Activated B cell treated with CpG ODN at 0.5 μM for 24 hours (primary cell): ENCODE measurements at regions of chr3 and their contacts with region 1.

Region 1: GRCh38 chr3:177197041-177197727 is at the start of gene TBL1XR1:
- DNase-seq: peak; percentile 80
- ATAC-seq: peak; percentile 58
- H3K4me3 Mint-ChIP-seq: peak within 1 kb of the TSS; percentile 97
- H3K27ac Mint-ChIP-seq: peak within 1 kb of the TSS; percentile 97
- H3K4me1 Mint-ChIP-seq: peaks cover 59% of the 10 kb centered on the region
- H3K27me3 Mint-ChIP-seq: no peaks in the 10 kb centered on the region
- CTCF ChIP-seq: no peak
- total RNA-seq, gene TBL1XR1: 312 and 372 TPM in 2 replicates

Region 2: DNA sequence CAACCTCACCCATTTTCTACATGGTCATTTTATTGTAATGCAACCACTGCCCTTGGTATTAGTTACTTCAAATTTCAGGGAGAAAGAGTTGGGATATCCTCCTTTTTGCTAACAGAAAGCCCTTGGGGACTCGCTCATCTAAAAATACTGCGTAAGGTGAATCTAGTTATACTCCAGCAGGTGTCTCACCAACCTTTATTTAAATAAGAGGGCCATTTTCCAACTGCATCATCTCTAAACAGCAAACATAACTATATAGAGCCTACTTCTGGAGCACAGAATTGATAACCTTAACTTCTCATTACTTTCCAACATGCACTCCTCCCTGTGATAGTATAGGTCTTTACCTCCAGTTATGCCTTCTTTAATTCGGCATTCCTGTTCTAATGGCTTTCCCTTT is 77.4 kb before region 1 on chr3:
- CTCF ChIA-PET with region 1: no interaction called
- POLR2A ChIA-PET with region 1: no interaction called
- intact Hi-C with region 1: loop called (anchors 2 kb)
- DNase-seq: no peak
- ATAC-seq: no peak
- H3K4me3 Mint-ChIP-seq: no peak overlapping the region
- H3K27ac Mint-ChIP-seq: no peak overlapping the region
- H3K4me1 Mint-ChIP-seq: peaks cover 82% of the 10 kb centered on the region
- H3K27me3 Mint-ChIP-seq: no peaks in the 10 kb centered on the region
- CTCF ChIP-seq: no peak

Region 3: GRCh38 chr3:177213801-177214535 is 16.8 kb after region 1 on chr3:
- CTCF ChIA-PET with region 1: interaction called, 4 read pairs
- POLR2A ChIA-PET with region 1: interaction called, 5 read pairs
- intact Hi-C with region 1: loop called (anchors 1 kb)
- DNase-seq: no peak
- ATAC-seq: no peak
- H3K4me3 Mint-ChIP-seq: no peak overlapping the region
- H3K27ac Mint-ChIP-seq: no peak overlapping the region
- H3K4me1 Mint-ChIP-seq: no peaks in the 10 kb centered on the region
- H3K27me3 Mint-ChIP-seq: no peaks in the 10 kb centered on the region
- CTCF ChIP-seq: no peak

Region 4: GRCh38 chr3:177251755-177252154 is 54.6 kb after region 1 on chr3:
- CTCF ChIA-PET with region 1: interaction called, 7 read pairs
- POLR2A ChIA-PET with region 1: interaction called, 26 read pairs
- intact Hi-C with region 1: loop called (anchors 1 kb)
- DNase-seq: no peak
- ATAC-seq: peak; percentile 64
- H3K4me3 Mint-ChIP-seq: no peak overlapping the region
- H3K27ac Mint-ChIP-seq: peak overlapping the region; percentile 79
- H3K4me1 Mint-ChIP-seq: peaks cover 36% of the 10 kb centered on the region
- H3K27me3 Mint-ChIP-seq: no peaks in the 10 kb centered on the region
- CTCF ChIP-seq: no peak

Region 5: DNA sequence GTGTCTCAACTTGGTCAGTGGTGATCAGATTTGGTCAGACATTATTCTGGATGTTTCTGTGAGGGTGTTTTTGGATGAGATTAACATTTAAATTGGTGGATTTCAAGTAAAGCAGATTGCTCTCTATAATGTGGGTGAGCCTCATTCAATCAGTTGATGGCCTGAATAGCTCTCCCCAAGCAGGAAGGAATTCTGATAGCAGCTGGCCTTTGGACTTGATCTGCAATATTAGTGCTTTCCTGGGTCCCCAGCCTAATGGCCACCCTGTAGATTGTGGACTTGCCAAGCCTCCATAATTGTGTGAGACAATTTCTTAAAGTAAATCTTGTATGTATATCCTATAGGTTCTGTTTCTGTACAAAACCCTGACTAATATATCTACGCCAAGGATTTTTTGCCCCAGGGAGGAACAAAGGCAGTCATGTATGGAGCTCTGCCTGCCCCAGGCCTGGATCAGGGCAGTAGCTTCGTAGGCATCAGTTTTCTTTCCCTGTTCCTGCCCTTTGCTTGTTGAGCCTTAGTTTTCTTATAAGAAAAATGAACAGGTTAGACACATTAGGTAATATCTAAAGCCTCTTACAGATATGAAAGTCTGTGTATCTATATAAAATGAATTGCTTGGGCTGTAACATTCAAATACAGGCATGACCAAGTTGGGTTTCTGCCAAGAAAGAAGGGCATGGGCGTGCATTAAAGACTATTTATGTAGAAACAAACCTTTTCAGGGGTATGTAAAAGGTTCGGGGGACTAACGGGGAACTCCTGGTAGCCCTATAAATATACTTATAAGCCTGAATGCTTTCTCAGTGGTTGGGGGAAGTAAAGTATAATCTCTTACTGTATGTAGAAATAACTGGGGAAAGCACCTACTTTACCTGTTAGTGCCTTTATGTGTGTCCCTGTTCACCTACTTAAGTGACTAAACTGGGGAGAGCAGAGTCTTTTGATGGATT is 154.3 kb after region 1 on chr3:
- CTCF ChIA-PET with region 1: interaction called, 3 read pairs
- POLR2A ChIA-PET with region 1: interaction called, 247 read pairs
- intact Hi-C with region 1: no loop called
- DNase-seq: no peak
- ATAC-seq: peak; percentile 85
- H3K4me3 Mint-ChIP-seq: peak overlapping the region; percentile 74
- H3K27ac Mint-ChIP-seq: peak overlapping the region; percentile 95
- H3K4me1 Mint-ChIP-seq: peaks cover 82% of the 10 kb centered on the region
- H3K27me3 Mint-ChIP-seq: no peaks in the 10 kb centered on the region
- CTCF ChIP-seq: no peak

Region 6: DNA sequence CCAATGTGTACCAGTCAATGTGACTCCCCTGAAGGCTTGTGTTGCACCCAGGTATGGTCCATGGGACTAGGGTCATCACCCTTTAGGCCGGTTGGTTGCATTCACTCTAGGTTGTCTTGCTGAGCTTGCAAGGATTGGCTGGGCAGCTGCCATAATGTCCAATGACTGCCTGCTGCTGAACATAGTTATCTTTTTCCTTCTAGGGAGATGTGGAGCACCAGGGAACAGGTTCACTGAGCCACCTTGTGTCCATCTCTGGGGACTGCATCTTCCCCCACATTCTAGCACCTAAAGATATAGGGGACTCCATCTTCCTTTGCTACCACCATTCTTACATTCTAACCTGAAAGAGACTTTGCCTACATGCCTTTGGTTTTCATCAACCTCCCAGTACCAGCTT is 580.5 kb after region 1 on chr3:
- CTCF ChIA-PET with region 1: no interaction called
- POLR2A ChIA-PET with region 1: no interaction called
- intact Hi-C with region 1: loop called (anchors 1 kb)
- DNase-seq: no peak
- ATAC-seq: peak; percentile 75
- H3K4me3 Mint-ChIP-seq: no peak overlapping the region
- H3K27ac Mint-ChIP-seq: no peak overlapping the region
- H3K4me1 Mint-ChIP-seq: peaks cover 18% of the 10 kb centered on the region
- H3K27me3 Mint-ChIP-seq: no peaks in the 10 kb centered on the region
- CTCF ChIP-seq: no peak